ENCODE measurements at regions of chr6 and their contacts with region 1.

Region 1: DNA sequence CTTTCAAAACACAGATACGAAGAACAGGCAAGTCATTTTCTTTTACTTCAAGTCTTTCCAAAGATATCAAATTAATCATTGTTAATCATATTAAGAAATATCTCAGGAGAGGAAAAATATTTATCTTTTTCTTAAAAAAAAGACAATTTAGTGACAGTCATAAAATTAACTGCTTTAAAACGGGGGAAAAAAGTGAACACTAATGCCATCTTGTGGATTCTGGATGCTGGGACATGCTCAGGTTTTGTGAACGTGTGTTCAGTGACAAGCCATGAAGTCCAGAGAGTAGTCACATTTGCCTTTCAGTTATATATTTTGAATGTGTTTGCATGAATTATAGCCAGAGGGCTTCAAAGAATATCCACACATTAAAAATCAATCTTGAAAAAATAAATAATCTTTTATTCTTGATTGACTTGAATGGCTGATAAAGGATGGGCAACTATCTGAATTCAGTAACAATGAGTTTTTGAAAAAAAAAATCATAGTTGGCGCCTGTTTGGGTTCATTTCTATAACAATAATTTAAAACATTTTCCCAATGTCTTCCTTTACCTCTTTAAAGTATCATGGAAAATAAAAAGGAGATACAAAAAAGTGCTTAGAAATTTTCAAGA is 74.7 kb upstream of the NOX3 start:
- DNase-seq: no peak
- ATAC-seq: peak; percentile 89
- H3K4me3 ChIP-seq: no peak overlapping the region
- H3K27ac ChIP-seq: no peak overlapping the region
- H3K4me1 ChIP-seq: no peaks in the 10 kb centered on the region
- H3K27me3 ChIP-seq: no peaks in the 10 kb centered on the region
- CTCF ChIP-seq: peak; percentile 66 to 76 (median 76); a peak in 5 of 6 replicates
- EP300 ChIP-seq: no peak
- POLR2A ChIP-seq: no peak
- RAD21 ChIP-seq: peak; percentile 89

Region 2: DNA sequence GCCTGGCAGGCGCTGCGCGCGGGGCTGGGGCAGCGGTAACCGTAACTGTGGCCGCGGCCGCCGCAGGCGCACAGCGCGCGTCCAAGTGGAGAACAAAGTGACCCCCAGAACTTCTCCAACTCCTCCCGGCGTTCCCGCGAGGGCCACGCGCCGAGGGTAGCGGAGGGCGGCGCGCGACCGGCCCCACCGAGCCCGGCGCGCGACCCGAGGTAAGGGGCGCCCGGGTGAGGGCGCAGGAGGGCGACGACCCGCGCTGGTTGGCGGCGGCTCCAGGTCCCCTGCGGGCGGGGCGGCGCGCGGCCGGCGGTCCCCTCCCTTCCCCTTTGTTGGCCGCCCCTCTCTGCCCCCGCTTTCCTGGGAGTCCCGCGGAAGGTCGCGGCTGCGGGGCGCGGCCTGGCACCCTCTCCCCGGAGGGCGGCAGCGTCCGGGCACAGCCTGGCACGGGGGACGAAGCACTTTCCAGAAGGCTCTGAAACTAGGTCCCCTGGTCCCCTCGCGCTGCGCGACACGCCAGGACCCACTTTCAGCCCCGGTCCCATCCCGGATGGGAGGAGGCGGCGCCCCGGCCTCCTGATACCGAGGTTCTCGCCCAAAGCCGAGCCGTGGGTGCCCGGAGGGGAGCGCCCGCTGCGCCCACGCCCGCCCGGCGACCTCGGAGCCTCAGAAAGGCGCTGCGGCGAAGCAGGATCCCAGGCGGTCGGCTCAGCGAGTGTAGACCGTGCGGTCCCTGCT is 534.9 kb before region 1 on chr6 and contains the start of gene TIAM2:
- CTCF ChIA-PET with region 1: no interaction called
- POLR2A ChIA-PET with region 1: interaction called, 10 read pairs
- RAD21 ChIA-PET with region 1: no interaction called
- SMC1A ChIA-PET with region 1: no interaction called
- in situ Hi-C with region 1: no loop called
- intact Hi-C with region 1: no loop called
- DNase-seq: no peak
- ATAC-seq: peak; percentile 64
- H3K4me3 ChIP-seq: peak within 1 kb of the TSS; percentile 55; the same call in 1 of the 2 replicates
- H3K27ac ChIP-seq: no peak within 1 kb of the TSS
- H3K4me1 ChIP-seq: no peaks in the 10 kb centered on the region
- H3K27me3 ChIP-seq: peaks cover 5 to 10% of the 10 kb centered on the region in 2 experiments; a peak in 3 of 4 replicates
- CTCF ChIP-seq: no peak
- EP300 ChIP-seq: no peak
- POLR2A ChIP-seq: no peak
- RAD21 ChIP-seq: no peak
- polyA plus RNA-seq, gene TIAM2: 1.1 to 1.4 TPM

Region 3: GRCh38 chr6:155333414-155333813 is 196.9 kb before region 1 on chr6:
- CTCF ChIA-PET with region 1: interaction called, 51 read pairs
- POLR2A ChIA-PET with region 1: no interaction called
- RAD21 ChIA-PET with region 1: interaction called, 24 read pairs
- SMC1A ChIA-PET with region 1: interaction called, 35 read pairs
- in situ Hi-C with region 1: loop called (anchors 5 kb)
- intact Hi-C with region 1: no loop called
- DNase-seq: peak; percentile 58
- ATAC-seq: peak; percentile 86
- H3K4me3 ChIP-seq: no peak overlapping the region
- H3K27ac ChIP-seq: peak overlapping the region; percentile 23
- H3K4me1 ChIP-seq: peaks cover 12% of the 10 kb centered on the region; the same call in 1 of the 2 replicates
- H3K27me3 ChIP-seq: no peaks in the 10 kb centered on the region
- CTCF ChIP-seq: no peak
- EP300 ChIP-seq: no peak
- POLR2A ChIP-seq: no peak
- RAD21 ChIP-seq: no peak

Region 4: GRCh38 chr6:155340464-155341129 is 189.7 kb before region 1 on chr6:
- CTCF ChIA-PET with region 1: interaction called, 11 read pairs
- POLR2A ChIA-PET with region 1: no interaction called
- RAD21 ChIA-PET with region 1: interaction called, 4 read pairs
- SMC1A ChIA-PET with region 1: interaction called, 7 read pairs
- in situ Hi-C with region 1: no loop called
- intact Hi-C with region 1: no loop called
- DNase-seq: no peak
- ATAC-seq: peak; percentile 64
- H3K4me3 ChIP-seq: no peak overlapping the region
- H3K27ac ChIP-seq: peak overlapping the region; percentile 67
- H3K4me1 ChIP-seq: peaks cover 17% of the 10 kb centered on the region
- H3K27me3 ChIP-seq: no peaks in the 10 kb centered on the region
- CTCF ChIP-seq: peak in 2 of 3 experiments; percentile 14 to 26; a peak in 2 of 6 replicates
- EP300 ChIP-seq: no peak
- POLR2A ChIP-seq: no peak
- RAD21 ChIP-seq: peak; percentile 56